Right ventricle myocardium superior (tissue), 1 donor: ENCODE measurements at regions of chr10 and their contacts with region 1.

Region 1: GRCh38 chr10:104922810-104923209 is 281.7 kb downstream of the SORCS3 start:
- DNase-seq: no peak
- ATAC-seq: no peak

Region 2: GRCh38 chr10:104642658-104643302 is 280.0 kb before region 1 on chr10:
- intact Hi-C with region 1: loop called (anchors 5 kb)
- DNase-seq: peak; percentile 51
- ATAC-seq: peak; percentile 76

Region 3: DNA sequence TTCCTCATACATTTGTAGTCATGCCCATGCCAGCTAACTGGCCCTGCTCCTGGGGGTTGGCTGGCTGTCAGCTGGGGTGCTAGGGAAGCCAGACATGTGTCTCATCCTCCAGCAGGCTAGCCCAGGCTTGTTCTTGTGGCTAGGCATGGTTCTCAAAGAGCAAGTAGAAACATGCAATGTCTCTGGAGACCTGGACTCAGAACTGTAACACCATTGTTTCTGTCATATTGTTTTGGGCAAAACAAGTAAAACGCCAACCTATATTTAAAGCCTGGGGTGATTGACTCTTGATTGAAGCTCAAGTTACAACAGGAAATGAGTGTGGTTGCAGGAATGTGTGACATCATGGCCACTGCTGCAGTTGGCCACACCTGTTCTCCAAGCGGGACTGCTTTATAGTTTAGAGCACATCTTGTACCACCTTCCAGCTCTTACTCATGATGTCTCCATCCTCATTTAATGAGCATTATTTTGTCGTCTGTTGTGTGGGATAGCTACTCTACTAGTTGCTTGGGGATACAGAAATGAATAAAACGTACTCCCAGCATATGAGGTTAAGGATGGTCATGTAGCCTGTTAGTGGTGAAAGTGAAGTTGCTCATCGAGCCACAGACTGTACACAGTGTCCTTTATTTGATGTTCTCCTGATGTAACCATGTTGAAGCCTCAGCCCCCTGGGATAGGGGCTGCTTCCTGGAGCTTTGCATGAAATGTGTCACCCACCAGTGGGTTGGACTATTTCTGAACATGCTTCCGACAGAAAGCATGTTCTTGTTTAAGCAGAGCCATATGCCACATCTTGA is 113.3 kb before region 1 on chr10:
- intact Hi-C with region 1: no loop called
- DNase-seq: no peak
- ATAC-seq: no peak

Region 4: DNA sequence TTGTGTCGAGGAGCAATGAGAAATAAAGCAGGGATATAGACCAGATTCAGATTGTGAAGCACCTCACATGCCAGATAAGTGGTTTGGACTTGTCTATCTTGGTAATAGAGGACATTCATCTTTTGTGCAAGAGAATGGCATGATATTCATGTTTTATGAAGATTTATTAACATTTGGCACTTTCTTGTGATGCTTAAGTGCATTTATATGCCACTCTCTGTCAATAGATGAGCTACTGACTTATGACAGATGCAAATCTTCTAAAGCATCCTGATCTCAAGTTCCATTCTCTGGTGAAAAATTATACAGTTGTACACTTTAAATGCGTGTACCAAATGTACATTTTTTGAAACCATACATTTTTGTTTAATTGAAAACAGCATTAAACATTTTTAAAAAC is 133.6 kb after region 1 on chr10:
- intact Hi-C with region 1: no loop called
- DNase-seq: no peak
- ATAC-seq: no peak

Region 5: DNA sequence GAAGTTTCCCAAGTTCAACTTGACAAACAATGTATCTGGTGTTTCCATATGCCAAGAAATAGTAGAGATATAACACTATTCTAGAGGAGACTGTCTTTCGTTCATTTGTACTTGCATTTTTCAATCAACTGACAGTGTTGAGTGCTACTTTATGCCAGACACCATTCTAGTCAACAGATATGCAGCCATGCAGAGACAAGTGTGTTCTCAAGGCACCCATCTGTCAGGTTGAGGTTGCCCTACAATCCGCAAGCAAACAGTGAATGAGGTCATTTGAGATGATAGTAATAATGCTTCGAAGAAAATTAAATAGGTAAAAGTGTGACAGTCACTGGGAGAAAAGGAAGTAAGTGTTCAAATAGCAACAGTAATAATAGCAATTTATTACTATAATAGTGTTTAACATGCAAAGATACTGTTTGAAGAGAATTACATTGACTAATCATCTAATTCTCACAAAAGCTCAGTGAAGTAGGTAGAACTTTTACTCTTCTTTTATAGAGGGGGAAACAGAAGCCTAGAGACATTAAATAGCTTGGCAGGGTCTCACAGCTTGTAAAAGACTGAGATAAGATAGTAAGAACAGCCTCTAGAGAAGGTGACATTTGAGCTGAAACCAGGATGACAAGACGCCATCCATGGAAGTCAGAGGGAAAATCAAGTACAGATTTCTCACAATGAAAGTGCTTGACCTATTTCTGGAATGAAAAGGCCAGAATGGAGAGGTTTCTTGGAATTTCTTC is 655.2 kb after region 1 on chr10:
- intact Hi-C with region 1: no loop called
- DNase-seq: no peak
- ATAC-seq: peak; percentile 59